ENCODE measurements at regions of chr11 and their contacts with region 1.

Region 1: DNA sequence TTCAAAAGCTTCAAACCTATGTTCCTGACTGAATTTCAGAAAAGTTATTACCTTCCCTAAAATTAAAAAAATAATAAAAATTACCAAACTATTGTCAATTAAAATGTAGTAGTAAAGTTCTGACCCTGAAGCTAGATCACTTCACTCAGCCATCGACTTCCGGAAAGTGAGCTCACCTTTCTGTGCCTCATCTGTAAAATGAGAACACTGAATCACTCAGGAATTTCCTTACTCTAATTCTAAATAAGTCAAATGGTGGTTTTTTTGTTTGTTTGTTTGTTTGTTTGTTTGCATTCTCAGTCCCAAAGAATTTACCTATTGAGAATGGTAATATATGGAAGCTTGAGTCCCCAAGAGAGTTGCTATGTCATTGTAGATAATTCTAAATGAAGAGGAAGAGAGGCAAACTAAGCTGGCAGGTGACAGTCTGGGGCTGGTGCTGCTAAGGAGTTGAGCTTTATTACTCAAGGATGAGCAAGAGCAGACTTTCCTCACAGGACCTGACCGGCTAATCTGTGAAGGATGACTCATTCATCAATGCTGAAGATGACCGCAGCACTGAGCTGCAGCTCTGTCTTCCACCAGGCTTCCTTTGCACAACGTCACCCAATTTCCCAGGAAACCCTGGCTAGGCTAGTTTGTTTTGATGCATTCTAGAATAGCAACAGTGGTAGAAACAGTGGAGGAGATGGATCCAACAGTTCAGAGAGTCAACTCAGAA is 248.8 kb downstream of the RAB38 start:
- DNase-seq: no peak
- H3K4me3 ChIP-seq: no peak overlapping the region
- H3K27ac ChIP-seq: no peak overlapping the region
- H3K4me1 ChIP-seq: no peaks in the 10 kb centered on the region
- CTCF ChIP-seq: no peak

Region 2: GRCh38 chr11:87901341-87901740 is 25.1 kb before region 1 on chr11:
- CTCF ChIA-PET with region 1: no interaction called
- POLR2A ChIA-PET with region 1: no interaction called
- intact Hi-C with region 1: loop called (anchors 2 kb)
- DNase-seq: no peak
- H3K4me3 ChIP-seq: no peak overlapping the region
- H3K27ac ChIP-seq: no peak overlapping the region
- H3K4me1 ChIP-seq: no peaks in the 10 kb centered on the region
- CTCF ChIP-seq: no peak

Measured in OCI-LY7 (cell line).